PC-9 (cell line): ENCODE measurements at regions of chr9 and their contacts with region 1.

Region 1: GRCh38 chr9:22238809-22239684 is 207.6 kb upstream of the DMRTA1 start:
- DNase-seq: peak in 1 of 2 experiments; percentile 66
- H3K4me3 ChIP-seq: peak overlapping the region; percentile 56
- H3K27ac ChIP-seq: peak overlapping the region; percentile 92
- H3K4me1 ChIP-seq: peaks cover 54% of the 10 kb centered on the region
- H3K27me3 ChIP-seq: no peaks in the 10 kb centered on the region
- CTCF ChIP-seq: peak; percentile 52

Region 2: DNA sequence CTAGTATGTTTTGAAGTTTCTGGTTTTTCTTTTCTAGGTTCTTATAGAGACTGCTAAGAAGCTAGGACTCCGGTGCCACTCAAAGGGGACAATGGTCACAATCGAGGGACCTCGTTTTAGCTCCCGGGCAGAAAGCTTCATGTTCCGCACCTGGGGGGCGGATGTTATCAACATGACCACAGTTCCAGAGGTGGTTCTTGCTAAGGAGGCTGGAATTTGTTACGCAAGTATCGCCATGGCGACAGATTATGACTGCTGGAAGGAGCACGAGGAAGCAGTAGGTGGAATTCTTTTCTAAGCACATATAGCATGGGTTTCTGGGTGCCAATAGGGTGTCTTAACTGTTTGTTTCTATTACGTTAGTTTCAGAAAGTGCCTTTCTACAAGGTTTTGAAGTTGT is 384.5 kb before region 1 on chr9:
- CTCF ChIA-PET with region 1: interaction called, 4 read pairs
- POLR2A ChIA-PET with region 1: interaction called, 11 read pairs
- intact Hi-C with region 1: loop called (anchors 1 kb)
- DNase-seq: peak; percentile 82 to 92
- H3K4me3 ChIP-seq: peak overlapping the region; percentile 8; the same call in 1 of the 2 replicates
- H3K27ac ChIP-seq: peak overlapping the region; percentile 67
- H3K4me1 ChIP-seq: peaks cover 30% of the 10 kb centered on the region
- H3K27me3 ChIP-seq: no peaks in the 10 kb centered on the region
- CTCF ChIP-seq: no peak

Region 3: GRCh38 chr9:22008736-22009562 is 230.1 kb before region 1 on chr9 and contains the start of gene CDKN2B:
- CTCF ChIA-PET with region 1: interaction called, 4 read pairs
- POLR2A ChIA-PET with region 1: interaction called, 3 read pairs
- intact Hi-C with region 1: loop called (anchors 1 kb)
- DNase-seq: peak; percentile 86 to 94
- H3K4me3 ChIP-seq: peak within 1 kb of the TSS; percentile 100
- H3K27ac ChIP-seq: peak within 1 kb of the TSS; percentile 92
- H3K4me1 ChIP-seq: peaks cover 29% of the 10 kb centered on the region
- H3K27me3 ChIP-seq: no peaks in the 10 kb centered on the region
- CTCF ChIP-seq: peak; percentile 82
- total RNA-seq, gene CDKN2B: 33.8 and 40.2 TPM in 2 replicates

Region 4: DNA sequence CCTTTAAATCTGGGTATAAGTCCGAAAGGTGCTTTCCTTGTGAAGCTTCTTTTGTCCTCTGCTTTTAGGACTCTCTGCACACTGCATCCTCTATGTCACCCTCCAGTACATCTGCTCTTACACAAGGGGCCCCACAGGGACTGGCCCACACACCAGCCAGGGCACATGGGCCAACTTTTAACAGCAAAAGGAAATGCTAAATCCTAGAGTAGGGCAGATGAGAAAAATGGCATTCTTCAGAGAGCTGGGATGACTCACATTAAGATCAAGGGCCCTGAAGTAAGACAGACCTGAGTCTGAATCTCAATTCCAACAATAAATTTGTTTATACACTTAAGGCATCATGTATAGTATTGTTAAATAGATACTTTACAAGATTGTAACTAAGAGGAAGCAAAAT is 189.6 kb before region 1 on chr9:
- CTCF ChIA-PET with region 1: no interaction called
- POLR2A ChIA-PET with region 1: interaction called, 23 read pairs
- intact Hi-C with region 1: no loop called
- DNase-seq: no peak
- H3K4me3 ChIP-seq: no peak overlapping the region
- H3K27ac ChIP-seq: no peak overlapping the region
- H3K4me1 ChIP-seq: peaks cover 29% of the 10 kb centered on the region
- H3K27me3 ChIP-seq: no peaks in the 10 kb centered on the region
- CTCF ChIP-seq: no peak

Region 5: GRCh38 chr9:22103650-22104575 is 135.1 kb before region 1 on chr9:
- CTCF ChIA-PET with region 1: interaction called, 3 read pairs
- POLR2A ChIA-PET with region 1: interaction called, 3 read pairs
- intact Hi-C with region 1: loop called (anchors 1 kb)
- DNase-seq: peak in 1 of 2 experiments; percentile 51
- H3K4me3 ChIP-seq: peak overlapping the region; percentile 18; the same call in 1 of the 2 replicates
- H3K27ac ChIP-seq: peak overlapping the region; percentile 94
- H3K4me1 ChIP-seq: peaks cover 53% of the 10 kb centered on the region
- H3K27me3 ChIP-seq: no peaks in the 10 kb centered on the region
- CTCF ChIP-seq: no peak

Region 6: DNA sequence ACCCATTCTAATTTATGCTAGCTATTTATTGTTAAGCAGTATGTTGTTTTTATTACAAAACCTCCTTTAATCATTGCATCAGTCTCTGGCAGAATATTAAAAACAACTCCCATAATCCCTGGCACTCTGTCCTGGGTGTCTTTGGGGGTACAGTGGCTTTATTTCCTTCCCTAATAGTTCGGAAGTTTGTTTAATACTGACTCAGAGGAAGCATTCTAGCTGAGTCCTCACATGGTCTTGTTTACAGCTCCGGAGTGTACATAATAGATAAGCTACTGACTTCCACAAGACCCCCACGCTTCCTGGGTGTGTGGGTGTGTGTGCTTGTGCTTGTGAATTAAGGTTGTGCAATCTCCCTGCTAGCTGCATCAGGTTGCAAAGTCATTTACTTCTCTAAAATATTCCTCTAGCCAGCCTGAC is 80.1 kb before region 1 on chr9:
- CTCF ChIA-PET with region 1: no interaction called
- POLR2A ChIA-PET with region 1: no interaction called
- intact Hi-C with region 1: loop called (anchors 5 kb)
- DNase-seq: peak; percentile 41 to 96
- H3K4me3 ChIP-seq: no peak overlapping the region
- H3K27ac ChIP-seq: peak overlapping the region; percentile 99
- H3K4me1 ChIP-seq: peaks cover 47% of the 10 kb centered on the region
- H3K27me3 ChIP-seq: no peaks in the 10 kb centered on the region
- CTCF ChIP-seq: no peak